ENCODE measurements at regions of chr3 and their contacts with region 1.

Region 1: GRCh38 chr3:133578548-133579191 is 5.2 kb downstream of the CDV3 start:
- DNase-seq: peak; percentile 74
- H3K4me3 ChIP-seq: peak overlapping the region in 1 of 2 experiments; percentile 14; a peak in 1 of 4 replicates
- H3K27ac ChIP-seq: no peak overlapping the region; a peak in 1 of 4 replicates
- H3K4me1 ChIP-seq: peaks cover 11 to 17% of the 10 kb centered on the region in 2 experiments; a peak in 2 of 4 replicates
- H3K27me3 ChIP-seq: no peaks in the 10 kb centered on the region
- CTCF ChIP-seq: peak; percentile 68
- EP300 ChIP-seq: no peak
- RAD21 ChIP-seq: peak; percentile 68

Region 2: DNA sequence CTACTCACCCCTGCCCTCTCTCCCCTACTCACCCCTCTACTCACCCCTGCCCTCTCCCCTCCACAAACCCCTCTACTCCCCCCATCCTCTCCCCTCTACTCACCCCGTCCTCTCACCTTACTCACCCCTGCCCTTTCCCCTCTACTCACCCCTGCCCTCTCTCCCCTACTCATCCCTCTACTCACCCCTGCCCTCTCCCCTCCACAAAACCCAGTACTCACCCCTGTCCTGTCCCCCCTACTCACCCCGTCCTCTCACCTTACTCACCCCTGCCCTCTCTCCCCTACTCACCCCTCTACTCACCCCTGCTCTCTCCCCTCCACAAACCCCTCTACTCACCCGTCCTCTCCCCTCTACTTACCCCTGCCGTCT is 164.7 kb before region 1 on chr3:
- CTCF ChIA-PET with region 1: no interaction called
- POLR2A ChIA-PET with region 1: no interaction called
- DNase-seq: no peak
- H3K4me3 ChIP-seq: no peak overlapping the region
- H3K27ac ChIP-seq: no peak overlapping the region
- H3K4me1 ChIP-seq: no peaks in the 10 kb centered on the region; a peak in 1 of 4 replicates
- H3K27me3 ChIP-seq: no peaks in the 10 kb centered on the region
- CTCF ChIP-seq: no peak
- EP300 ChIP-seq: no peak
- RAD21 ChIP-seq: no peak

Region 3: DNA sequence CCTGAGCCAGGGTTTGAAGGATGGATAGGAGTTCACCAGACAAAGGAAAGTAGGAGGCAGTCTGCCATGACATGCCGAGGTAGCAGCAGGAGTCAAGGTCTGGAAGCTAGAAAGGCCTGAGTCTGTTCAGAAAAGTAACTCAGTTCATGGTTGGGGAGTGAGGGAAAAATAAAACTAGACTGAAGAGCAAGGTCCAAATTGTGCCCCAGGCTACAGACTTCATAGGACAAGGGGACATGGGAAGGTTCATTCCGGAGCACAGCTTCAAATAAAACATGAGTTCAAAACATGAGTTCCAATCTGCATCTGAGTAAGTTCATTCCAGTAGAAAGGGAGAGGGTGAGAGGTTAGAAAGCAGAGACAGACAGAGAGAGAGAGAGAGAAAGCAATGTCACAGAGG is 139.1 kb before region 1 on chr3:
- CTCF ChIA-PET with region 1: interaction called, 20 read pairs
- POLR2A ChIA-PET with region 1: no interaction called
- DNase-seq: no peak
- H3K4me3 ChIP-seq: no peak overlapping the region
- H3K27ac ChIP-seq: no peak overlapping the region
- H3K4me1 ChIP-seq: no peaks in the 10 kb centered on the region; a peak in 1 of 4 replicates
- H3K27me3 ChIP-seq: no peaks in the 10 kb centered on the region
- CTCF ChIP-seq: no peak
- EP300 ChIP-seq: no peak
- RAD21 ChIP-seq: no peak

Region 4: GRCh38 chr3:133457465-133458067 is 121.1 kb before region 1 on chr3:
- CTCF ChIA-PET with region 1: interaction called, 18 read pairs
- POLR2A ChIA-PET with region 1: no interaction called
- DNase-seq: no peak
- H3K4me3 ChIP-seq: no peak overlapping the region
- H3K27ac ChIP-seq: no peak overlapping the region
- H3K4me1 ChIP-seq: peaks cover 10 to 11% of the 10 kb centered on the region in 2 experiments; a peak in 3 of 4 replicates
- H3K27me3 ChIP-seq: no peaks in the 10 kb centered on the region
- CTCF ChIP-seq: peak; percentile 48
- EP300 ChIP-seq: no peak
- RAD21 ChIP-seq: no peak

Region 5: DNA sequence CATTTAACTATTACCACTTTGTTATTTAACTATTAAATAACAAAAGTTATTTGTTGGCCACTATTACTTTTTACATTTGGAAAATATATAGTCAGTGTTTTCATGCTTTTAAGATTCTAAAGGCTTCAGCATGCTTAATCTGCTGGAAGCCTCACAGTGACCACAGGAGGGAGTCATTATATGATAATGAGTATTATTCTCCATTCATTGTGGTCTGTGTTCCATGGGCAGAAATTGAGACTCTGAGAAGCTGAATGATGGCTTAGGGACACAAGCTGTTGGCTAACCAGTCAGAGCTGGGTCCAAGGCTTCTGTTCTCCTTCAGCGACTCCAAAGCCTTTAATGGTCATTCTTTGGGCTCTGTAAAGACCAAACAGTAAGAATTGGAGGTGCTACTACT is 114.1 kb before region 1 on chr3:
- CTCF ChIA-PET with region 1: interaction called, 11 read pairs
- POLR2A ChIA-PET with region 1: no interaction called
- DNase-seq: peak; percentile 41
- H3K4me3 ChIP-seq: no peak overlapping the region
- H3K27ac ChIP-seq: no peak overlapping the region
- H3K4me1 ChIP-seq: no peaks in the 10 kb centered on the region; a peak in 1 of 4 replicates
- H3K27me3 ChIP-seq: no peaks in the 10 kb centered on the region
- CTCF ChIP-seq: peak; percentile 59
- EP300 ChIP-seq: no peak
- RAD21 ChIP-seq: peak; percentile 49

Region 6: DNA sequence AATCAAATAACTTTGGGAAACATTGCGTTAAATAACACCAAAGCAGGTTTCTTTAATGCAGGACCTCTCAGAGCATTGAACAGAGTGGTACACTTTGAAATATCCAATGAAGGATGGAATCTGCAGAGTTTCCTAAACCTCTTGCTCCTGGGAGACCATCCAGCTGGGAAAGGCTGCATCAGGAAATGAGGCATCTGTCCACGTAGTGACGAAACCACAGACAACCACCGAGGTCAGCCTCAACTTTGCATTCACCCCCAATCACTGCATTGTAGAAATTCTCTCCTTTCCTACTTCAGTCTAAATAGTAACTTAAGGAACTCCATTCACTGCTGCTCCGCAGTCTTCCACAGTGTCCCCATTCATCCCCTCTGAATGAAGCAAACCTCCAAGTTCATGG is 46.7 kb before region 1 on chr3:
- CTCF ChIA-PET with region 1: no interaction called
- POLR2A ChIA-PET with region 1: no interaction called
- DNase-seq: no peak
- H3K4me3 ChIP-seq: no peak overlapping the region
- H3K27ac ChIP-seq: no peak overlapping the region
- H3K4me1 ChIP-seq: peaks cover 2 to 10% of the 10 kb centered on the region in 2 experiments; a peak in 1 of 4 replicates
- H3K27me3 ChIP-seq: no peaks in the 10 kb centered on the region
- CTCF ChIP-seq: no peak
- EP300 ChIP-seq: no peak
- RAD21 ChIP-seq: no peak

Measured in SK-N-SH (cell line).